OCI-LY7 (cell line): ENCODE measurements at regions of chr5 and their contacts with region 1.

Region 1: DNA sequence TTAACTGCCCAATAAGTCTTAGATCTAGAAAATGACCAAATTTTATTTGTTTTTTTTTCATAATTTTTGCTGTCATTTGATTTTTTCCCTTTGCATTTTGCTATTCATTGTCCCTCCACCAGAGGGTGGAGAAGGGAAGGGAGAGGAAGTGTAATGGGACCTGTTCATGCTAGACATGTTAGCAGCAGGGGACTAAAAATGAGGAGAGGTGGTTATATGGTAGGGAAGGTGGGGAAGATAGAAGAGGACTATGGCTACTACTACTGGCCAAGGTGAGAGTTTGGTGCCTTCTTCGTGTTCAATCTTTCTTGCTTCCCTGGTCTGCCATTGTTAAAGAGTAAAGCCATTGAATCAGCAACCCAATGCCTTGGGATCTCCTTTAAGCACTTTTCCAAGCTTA is 6.4 kb downstream of the GRIA1 start:
- DNase-seq: peak; percentile 64
- H3K4me3 ChIP-seq: no peak overlapping the region
- H3K27ac ChIP-seq: no peak overlapping the region
- H3K4me1 ChIP-seq: peaks cover 6% of the 10 kb centered on the region
- CTCF ChIP-seq: peak; percentile 97

Region 2: DNA sequence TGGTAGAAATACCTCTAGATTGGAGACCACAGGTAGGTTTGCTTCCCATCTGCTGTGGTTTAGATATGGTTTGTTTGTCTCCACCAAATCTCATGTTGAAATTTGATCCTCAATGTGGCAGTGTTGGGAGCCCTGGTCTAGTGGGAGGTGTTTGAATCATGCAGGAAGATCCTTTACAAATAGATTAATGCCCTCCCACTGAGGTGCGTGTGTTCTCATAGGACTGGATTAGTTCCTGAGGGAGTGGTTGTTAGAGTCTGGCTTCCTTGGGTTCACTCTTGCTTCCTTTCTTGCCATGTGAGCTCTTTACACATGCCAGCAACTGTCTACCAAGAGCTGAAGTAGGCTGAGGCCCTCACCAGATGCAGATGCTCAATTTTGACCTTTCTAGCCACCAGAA is 397.5 kb before region 1 on chr5:
- CTCF ChIA-PET with region 1: no interaction called
- POLR2A ChIA-PET with region 1: no interaction called
- intact Hi-C with region 1: no loop called
- DNase-seq: no peak
- H3K4me3 ChIP-seq: no peak overlapping the region
- H3K27ac ChIP-seq: no peak overlapping the region
- H3K4me1 ChIP-seq: no peaks in the 10 kb centered on the region
- CTCF ChIP-seq: no peak

Region 3: DNA sequence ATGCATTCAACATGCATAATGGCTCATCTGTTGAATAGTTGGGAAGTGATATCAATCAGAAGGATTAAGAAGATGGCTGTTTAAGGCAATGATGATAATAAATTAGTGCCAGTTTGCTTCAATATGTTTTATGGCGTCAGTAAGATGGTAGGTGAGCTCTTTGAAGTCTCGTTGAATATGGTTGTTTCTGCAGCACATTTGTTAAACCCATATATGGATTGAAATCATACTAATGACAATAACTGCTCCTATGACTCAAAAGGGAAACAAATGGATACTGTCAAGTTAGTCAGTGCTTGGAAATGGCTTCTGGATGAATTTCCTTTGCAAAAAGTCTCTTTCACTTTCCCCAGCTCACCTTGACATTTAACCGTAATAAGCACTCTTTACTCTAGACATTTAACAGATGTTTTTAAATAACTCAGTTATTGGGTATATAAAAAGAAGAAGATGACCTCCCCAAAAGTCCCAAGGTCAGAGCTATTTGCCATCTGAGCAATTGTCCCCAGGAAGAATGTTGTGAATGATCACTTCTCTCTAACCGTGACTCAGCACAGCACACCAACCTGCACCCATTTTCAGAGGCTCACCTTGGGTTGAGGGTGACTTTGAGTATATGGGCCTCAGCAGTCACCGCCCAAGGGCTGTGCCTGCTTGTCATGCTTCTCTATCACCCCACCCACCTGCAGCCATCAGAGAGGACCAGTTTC is 127.1 kb after region 1 on chr5:
- CTCF ChIA-PET with region 1: interaction called, 15 read pairs
- POLR2A ChIA-PET with region 1: interaction called, 3 read pairs
- intact Hi-C with region 1: loop called (anchors 2 kb)
- DNase-seq: peak; percentile 25
- H3K4me3 ChIP-seq: no peak overlapping the region
- H3K27ac ChIP-seq: no peak overlapping the region
- H3K4me1 ChIP-seq: peaks cover 54% of the 10 kb centered on the region
- CTCF ChIP-seq: no peak

Region 4: GRCh38 chr5:153711755-153712154 is 214.9 kb after region 1 on chr5:
- CTCF ChIA-PET with region 1: interaction called, 3 read pairs
- POLR2A ChIA-PET with region 1: interaction called, 6 read pairs
- intact Hi-C with region 1: loop called (anchors 1 kb)
- DNase-seq: peak; percentile 43
- H3K4me3 ChIP-seq: no peak overlapping the region
- H3K27ac ChIP-seq: no peak overlapping the region
- H3K4me1 ChIP-seq: peaks cover 7% of the 10 kb centered on the region
- CTCF ChIP-seq: peak; percentile 74

Region 5: DNA sequence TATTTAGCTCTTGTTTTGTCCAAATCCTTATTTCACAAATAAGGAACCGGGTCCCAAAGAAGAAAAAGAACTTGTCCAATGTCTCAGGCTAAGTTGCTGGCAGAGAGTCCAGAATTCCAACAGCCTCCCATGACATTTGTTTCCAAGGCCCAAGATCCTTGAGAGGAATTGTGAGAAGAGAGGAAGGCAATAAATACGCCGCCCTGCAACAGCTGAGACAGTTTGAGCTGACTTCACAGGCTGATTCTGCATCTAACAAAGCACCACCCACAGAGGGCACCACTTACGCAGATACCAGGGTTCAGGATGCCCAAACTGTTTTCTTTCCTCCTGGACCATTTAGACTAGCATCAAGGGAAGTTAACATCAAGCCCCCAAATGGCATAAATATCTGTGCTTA is 330.6 kb after region 1 on chr5:
- CTCF ChIA-PET with region 1: no interaction called
- POLR2A ChIA-PET with region 1: interaction called, 3 read pairs
- intact Hi-C with region 1: loop called (anchors 10 kb)
- DNase-seq: peak; percentile 39
- H3K4me3 ChIP-seq: no peak overlapping the region
- H3K27ac ChIP-seq: peak overlapping the region; percentile 79
- H3K4me1 ChIP-seq: peaks cover 50% of the 10 kb centered on the region
- CTCF ChIP-seq: peak; percentile 75